ENCODE measurements at regions of chr19 and their contacts with region 1.

Region 1: DNA sequence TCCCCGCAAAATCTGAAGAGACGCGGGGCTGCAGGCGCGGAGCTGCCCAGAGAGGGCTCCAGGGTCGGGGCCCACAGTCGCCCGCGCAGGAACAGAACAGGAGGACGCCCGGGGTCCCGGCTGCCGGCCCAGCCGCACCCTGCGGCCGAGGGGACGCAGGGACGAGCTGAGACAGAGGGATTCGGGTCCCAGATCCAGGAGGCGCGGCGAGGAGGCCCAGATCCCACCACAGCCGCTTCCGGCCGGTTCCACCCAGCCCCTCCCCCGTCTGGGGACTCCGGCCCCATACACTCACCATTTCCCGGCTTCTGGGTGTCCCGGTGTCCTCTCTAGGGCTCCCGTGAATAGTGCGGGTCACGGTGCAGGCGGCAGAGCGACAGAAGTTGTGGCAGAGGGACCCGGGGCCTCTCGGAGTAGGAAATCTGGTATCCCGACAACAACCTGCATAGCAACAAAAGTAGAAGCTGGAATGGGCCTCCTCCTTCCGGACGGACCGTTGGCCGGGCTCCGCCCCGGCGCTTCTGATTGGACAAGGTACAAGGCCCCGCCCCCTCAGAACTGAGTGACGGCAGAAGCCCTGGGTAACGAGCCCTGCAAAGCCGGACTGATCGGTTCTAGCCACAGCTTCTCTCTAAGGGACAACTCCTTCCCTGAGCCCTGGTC is at the start of gene ZNF20:
- DNase-seq: peak; percentile 92 to 98
- H3K4me3 ChIP-seq: peak within 1 kb of the TSS; percentile 68 to 94 (median 90)
- H3K27ac ChIP-seq: peak within 1 kb of the TSS; percentile 95
- H3K4me1 ChIP-seq: peaks cover 2 to 10% (median 6%) of the 10 kb centered on the region in 4 experiments; a peak in 6 of 7 replicates
- H3K27me3 ChIP-seq: no peaks in the 10 kb centered on the region
- CTCF ChIP-seq: no peak
- EP300 ChIP-seq: no peak
- POLR2A ChIP-seq: peak; percentile 61 to 89
- RAD21 ChIP-seq: 0 out of 4 replicates have a peak, but pooled peaks of 1 of the 2 experiments have one; percentile 0
- total RNA-seq, gene ZNF20: 7.4 and 9.0 TPM in 2 replicates

Region 2: GRCh38 chr19:11924886-11925650 is 214.9 kb before region 1 on chr19 and contains the start of gene ZNF700:
- CTCF ChIA-PET with region 1: interaction called, 16 read pairs
- POLR2A ChIA-PET with region 1: interaction called, 15 read pairs
- DNase-seq: peak; percentile 56 to 95
- H3K4me3 ChIP-seq: peak within 1 kb of the TSS; percentile 65 to 82 (median 76)
- H3K27ac ChIP-seq: peak within 1 kb of the TSS; percentile 95
- H3K4me1 ChIP-seq: peaks cover 0 to 3% (median 3%) of the 10 kb centered on the region in 4 experiments; a peak in 4 of 7 replicates
- H3K27me3 ChIP-seq: 0 out of 7 replicates have a peak, but pooled peaks cover 0 to 3% (median 0%) of the 10 kb centered on the region in 4 experiments
- CTCF ChIP-seq: no peak
- EP300 ChIP-seq: 0 out of 3 replicates have a peak, but pooled peaks of 1 of the 2 experiments have one; percentile 17
- POLR2A ChIP-seq: peak; percentile 91 to 98
- RAD21 ChIP-seq: no peak
- total RNA-seq, gene ZNF700: 9.4 and 10.5 TPM in 2 replicates

Region 3: GRCh38 chr19:12052497-12053169 is 87.4 kb before region 1 on chr19 and contains the start of gene ZNF878:
- CTCF ChIA-PET with region 1: interaction called, 12 read pairs
- POLR2A ChIA-PET with region 1: interaction called, 30 read pairs
- DNase-seq: peak; percentile 95 to 97
- H3K4me3 ChIP-seq: peak within 1 kb of the TSS; percentile 42 to 92 (median 86)
- H3K27ac ChIP-seq: peak within 1 kb of the TSS; percentile 84; the same call in 1 of the 2 replicates
- H3K4me1 ChIP-seq: peaks cover 0 to 6% (median 4%) of the 10 kb centered on the region in 4 experiments; a peak in 3 of 7 replicates
- H3K27me3 ChIP-seq: no peaks in the 10 kb centered on the region
- CTCF ChIP-seq: peak in 2 of 3 experiments; percentile 13 to 14; a peak in 2 of 4 replicates
- EP300 ChIP-seq: no peak; a peak in 1 of 3 replicates
- POLR2A ChIP-seq: peak; percentile 96 to 100
- RAD21 ChIP-seq: no peak; a peak in 1 of 4 replicates
- total RNA-seq, gene ZNF878: 9.1 and 9.5 TPM in 2 replicates

Region 4: DNA sequence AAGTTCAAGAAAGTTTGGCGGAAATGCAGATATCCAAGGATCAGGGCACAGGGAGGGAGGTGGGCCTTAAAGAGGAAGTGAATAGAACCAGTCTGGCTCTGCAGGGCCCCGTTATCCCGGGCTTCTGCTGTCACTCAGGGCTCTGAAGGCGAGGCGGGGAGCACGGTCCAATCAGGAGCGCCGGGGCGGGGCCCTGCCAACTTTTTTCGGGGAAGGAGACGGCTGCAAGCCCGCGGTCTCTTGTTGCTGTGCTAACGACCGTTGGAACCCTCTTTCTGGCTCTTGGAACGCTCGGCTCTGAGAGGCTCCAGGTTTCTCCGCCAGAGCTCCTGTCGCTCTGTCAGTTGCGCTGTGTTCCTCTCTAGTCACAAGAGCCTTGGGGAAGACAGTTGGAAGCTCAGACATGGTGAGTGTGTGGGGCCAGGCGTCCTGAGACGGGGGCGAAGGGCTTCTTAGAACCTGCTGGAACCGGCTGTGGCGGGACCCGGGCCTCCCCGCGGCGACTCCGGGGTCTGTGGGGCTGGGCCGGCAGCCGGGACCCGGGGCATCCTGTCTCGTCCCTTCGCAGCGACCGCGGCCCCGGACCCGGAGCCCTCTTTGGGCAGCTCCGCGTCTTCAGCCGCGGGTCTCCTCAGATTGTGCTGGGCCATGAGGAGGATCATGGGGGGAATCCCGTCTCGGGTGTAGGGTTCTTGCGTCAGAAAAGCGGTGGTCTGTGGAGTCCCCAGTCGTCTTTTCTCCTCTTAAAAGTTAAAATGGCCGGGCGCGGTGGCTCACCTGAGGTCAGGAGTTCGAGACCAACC is 47.8 kb before region 1 on chr19:
- CTCF ChIA-PET with region 1: interaction called, 28 read pairs
- POLR2A ChIA-PET with region 1: interaction called, 24 read pairs
- DNase-seq: peak; percentile 81 to 93
- H3K4me3 ChIP-seq: peak overlapping the region; percentile 62 to 93 (median 76)
- H3K27ac ChIP-seq: peak overlapping the region; percentile 90
- H3K4me1 ChIP-seq: no peaks in the 10 kb centered on the region; a peak in 1 of 7 replicates
- H3K27me3 ChIP-seq: no peaks in the 10 kb centered on the region
- CTCF ChIP-seq: no peak
- EP300 ChIP-seq: no peak
- POLR2A ChIP-seq: peak; percentile 74 to 95
- RAD21 ChIP-seq: no peak

Region 5: GRCh38 chr19:12156223-12157058 is 16.4 kb after region 1 on chr19 and contains the start of gene ZNF625:
- CTCF ChIA-PET with region 1: interaction called, 10 read pairs
- POLR2A ChIA-PET with region 1: interaction called, 26 read pairs
- DNase-seq: peak; percentile 85 to 95
- H3K4me3 ChIP-seq: peak within 1 kb of the TSS; percentile 77 to 93 (median 82)
- H3K27ac ChIP-seq: peak within 1 kb of the TSS; percentile 93
- H3K4me1 ChIP-seq: peaks cover 0 to 3% (median 2%) of the 10 kb centered on the region in 4 experiments; a peak in 3 of 7 replicates
- H3K27me3 ChIP-seq: no peaks in the 10 kb centered on the region
- CTCF ChIP-seq: no peak
- EP300 ChIP-seq: no peak
- POLR2A ChIP-seq: peak; percentile 93 to 98
- RAD21 ChIP-seq: no peak
- total RNA-seq, gene ZNF625: 23.3 and 26.8 TPM in 2 replicates

Region 6: DNA sequence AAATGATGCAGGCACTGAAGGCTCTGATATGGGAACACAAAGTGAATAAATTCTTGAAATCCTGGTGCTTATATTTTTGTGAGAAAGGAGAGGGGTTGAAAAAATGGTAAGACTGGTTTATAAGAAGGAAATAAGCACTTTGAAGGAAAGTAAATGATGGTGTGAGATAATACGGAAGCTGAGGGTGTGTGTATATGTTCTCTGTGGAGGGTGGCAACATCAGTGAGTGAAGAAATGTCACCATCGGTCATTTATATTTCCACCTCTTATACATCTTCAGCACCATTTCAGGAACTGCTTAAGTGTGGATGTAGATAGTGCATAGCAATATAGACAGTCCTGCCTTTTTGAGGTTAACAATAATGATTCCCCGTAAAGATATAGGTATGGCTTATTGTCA is 40.4 kb after region 1 on chr19:
- CTCF ChIA-PET with region 1: no interaction called
- POLR2A ChIA-PET with region 1: no interaction called
- DNase-seq: no peak
- H3K4me3 ChIP-seq: no peak overlapping the region
- H3K27ac ChIP-seq: no peak overlapping the region
- H3K4me1 ChIP-seq: no peaks in the 10 kb centered on the region
- H3K27me3 ChIP-seq: no peaks in the 10 kb centered on the region
- CTCF ChIP-seq: no peak
- EP300 ChIP-seq: no peak
- POLR2A ChIP-seq: no peak
- RAD21 ChIP-seq: no peak

Region 7: DNA sequence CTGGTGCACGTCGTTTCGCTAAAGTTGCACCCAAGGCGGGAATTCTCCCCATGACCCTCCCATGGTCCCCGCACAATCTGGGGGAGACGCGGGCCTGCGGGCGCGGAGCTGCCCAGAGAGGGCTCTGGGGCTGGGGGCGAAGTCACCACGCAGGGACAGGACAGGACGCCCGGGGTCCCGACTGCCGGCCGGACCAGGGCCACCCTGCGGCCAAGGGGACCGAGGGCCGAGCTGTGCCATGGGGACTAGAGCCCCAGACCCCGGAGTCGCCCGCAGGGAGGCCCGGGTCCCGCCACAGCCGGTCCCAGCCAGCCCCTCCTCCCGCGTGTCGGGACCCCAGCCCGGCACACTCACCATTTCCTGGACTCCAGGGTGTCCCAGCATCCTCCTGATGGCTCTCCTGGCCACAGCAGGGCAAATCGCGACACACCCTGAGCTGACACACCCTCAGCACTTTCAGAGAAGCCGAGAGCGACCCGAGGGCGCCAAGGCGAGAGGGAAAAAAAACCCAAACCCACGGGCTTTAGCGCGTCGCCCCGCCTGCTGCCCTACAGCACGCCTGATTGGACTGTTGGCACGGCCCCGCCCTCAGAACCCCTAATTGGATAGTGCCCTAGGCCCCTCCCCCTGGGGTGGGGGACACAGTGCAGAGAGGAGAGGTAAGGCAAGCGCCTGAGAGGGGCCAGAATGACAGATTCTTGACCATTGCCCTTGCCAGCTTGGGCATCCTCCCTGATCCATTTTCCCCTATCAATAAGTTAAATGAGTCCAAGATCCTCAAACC is 126.1 kb after region 1 on chr19:
- CTCF ChIA-PET with region 1: no interaction called
- POLR2A ChIA-PET with region 1: no interaction called
- DNase-seq: no peak
- H3K4me3 ChIP-seq: no peak overlapping the region
- H3K27ac ChIP-seq: no peak overlapping the region
- H3K4me1 ChIP-seq: no peaks in the 10 kb centered on the region
- H3K27me3 ChIP-seq: no peaks in the 10 kb centered on the region
- CTCF ChIP-seq: no peak
- EP300 ChIP-seq: no peak
- POLR2A ChIP-seq: no peak
- RAD21 ChIP-seq: no peak